Mammary epithelial cell (primary cell): ENCODE measurements at regions of chr12 and their contacts with region 1.

Region 1: GRCh38 chr12:53938326-53939140 is at the start of gene HOXC13:
- DNase-seq: peak; percentile 100
- H3K4me3 ChIP-seq: peak within 1 kb of the TSS; percentile 73 to 89 (median 88)
- H3K27ac ChIP-seq: peak within 1 kb of the TSS; percentile 40
- H3K4me1 ChIP-seq: peaks cover 15% of the 10 kb centered on the region
- H3K27me3 ChIP-seq: no peaks in the 10 kb centered on the region
- CTCF ChIP-seq: no peak
- total RNA-seq, gene HOXC13: 10.2 to 15.7 TPM

Region 2: DNA sequence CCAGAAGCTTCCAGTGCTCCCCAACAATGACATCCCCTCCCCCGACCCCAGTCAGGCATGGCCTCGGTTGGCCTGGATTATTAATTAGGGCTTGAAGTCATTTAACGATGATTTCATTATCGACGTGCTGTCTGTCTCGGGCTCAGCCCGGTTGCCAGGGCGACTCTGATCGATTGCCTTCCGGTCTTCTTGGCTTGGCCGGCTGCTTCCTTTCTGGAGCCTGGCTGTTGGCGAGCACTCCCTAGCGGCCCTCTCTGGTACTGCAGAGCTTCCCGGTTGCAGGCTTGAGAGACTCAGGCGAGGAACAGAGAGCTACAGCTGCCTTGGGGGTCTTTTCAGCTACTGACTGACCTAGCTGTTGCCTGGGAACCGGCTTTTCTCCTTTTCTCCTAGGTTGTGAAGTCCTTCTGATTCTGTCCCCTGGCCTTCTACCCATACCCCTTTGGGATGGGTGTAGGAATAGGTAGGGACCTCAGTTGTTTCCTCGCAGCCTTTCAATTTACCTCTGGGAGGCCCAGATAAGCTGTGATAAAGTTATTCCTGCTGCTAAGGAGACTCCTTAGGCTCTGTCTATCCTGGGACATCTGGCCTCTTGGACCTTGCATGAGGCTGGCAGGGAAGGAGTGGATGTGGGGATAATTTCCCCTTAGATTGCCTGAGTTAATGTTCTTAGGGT is 181.3 kb before region 1 on chr12:
- CTCF ChIA-PET with region 1: interaction called, 5 read pairs
- dilution Hi-C with region 1: no loop called
- in situ Hi-C with region 1: loop called in 1 of 2 experiments (anchors 25 kb)
- intact Hi-C with region 1: no loop called
- DNase-seq: peak; percentile 48
- H3K4me3 ChIP-seq: no peak overlapping the region
- H3K27ac ChIP-seq: no peak overlapping the region
- H3K4me1 ChIP-seq: no peaks in the 10 kb centered on the region
- H3K27me3 ChIP-seq: peaks cover under 1% of the 10 kb centered on the region
- CTCF ChIP-seq: peak; percentile 83 to 92

Region 3: DNA sequence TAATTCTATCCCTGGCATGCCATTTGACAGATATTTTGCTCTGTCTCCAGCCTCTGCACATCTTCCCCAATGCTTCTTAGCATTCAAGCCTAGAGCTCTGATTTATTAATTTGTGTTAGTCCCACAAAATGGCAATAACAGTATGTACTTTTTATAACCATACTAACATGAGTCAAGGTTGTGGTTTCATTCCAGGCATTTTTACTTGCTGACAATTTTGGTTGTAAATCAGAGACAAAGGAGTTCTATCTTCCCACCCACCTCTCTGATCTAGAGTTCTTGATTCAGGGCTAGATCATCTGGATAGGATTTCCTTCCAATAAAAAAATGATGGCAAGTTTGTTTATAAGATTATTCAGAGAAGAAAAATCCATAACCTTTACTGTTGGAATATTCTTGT is 168.3 kb before region 1 on chr12:
- CTCF ChIA-PET with region 1: no interaction called
- dilution Hi-C with region 1: no loop called
- in situ Hi-C with region 1: loop called in 1 of 2 experiments (anchors 25 kb)
- intact Hi-C with region 1: loop called (anchors 1 kb)
- DNase-seq: peak; percentile 93
- H3K4me3 ChIP-seq: no peak overlapping the region
- H3K27ac ChIP-seq: peak overlapping the region; percentile 57
- H3K4me1 ChIP-seq: peaks cover 35% of the 10 kb centered on the region
- H3K27me3 ChIP-seq: no peaks in the 10 kb centered on the region
- CTCF ChIP-seq: no peak

Region 4: DNA sequence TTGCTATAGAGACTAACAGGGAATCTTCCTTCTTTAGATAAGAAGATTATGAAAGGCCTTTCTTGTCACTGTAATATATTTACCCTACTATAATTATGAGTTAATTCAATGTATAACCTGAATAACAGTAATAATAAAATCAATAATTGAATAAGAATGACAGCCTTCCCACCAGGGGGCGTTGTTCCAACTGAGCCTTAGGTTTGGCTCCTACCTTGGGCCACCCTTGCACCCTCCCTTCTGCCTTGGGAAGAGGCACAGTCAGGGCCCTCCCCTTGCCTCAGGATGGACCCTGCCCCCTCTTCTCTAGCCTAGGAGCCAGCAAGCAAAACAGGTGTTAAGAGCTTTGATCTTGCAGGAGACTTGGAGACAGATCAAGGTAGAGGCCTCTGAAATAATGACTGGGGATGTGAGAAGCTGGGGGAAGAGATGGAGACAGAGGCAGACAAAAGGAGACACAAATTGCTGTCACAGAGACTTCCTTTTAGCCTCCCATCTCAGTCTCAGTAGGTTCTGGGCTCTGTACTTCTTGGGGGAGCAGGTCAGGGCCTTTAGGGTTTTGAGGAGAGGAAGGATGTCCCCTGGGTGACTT is 146.7 kb before region 1 on chr12:
- CTCF ChIA-PET with region 1: no interaction called
- dilution Hi-C with region 1: no loop called
- in situ Hi-C with region 1: loop called in 1 of 2 experiments (anchors 10 kb)
- intact Hi-C with region 1: loop called (anchors 1 kb)
- DNase-seq: peak; percentile 26
- H3K4me3 ChIP-seq: no peak overlapping the region
- H3K27ac ChIP-seq: no peak overlapping the region
- H3K4me1 ChIP-seq: no peaks in the 10 kb centered on the region
- H3K27me3 ChIP-seq: no peaks in the 10 kb centered on the region
- CTCF ChIP-seq: peak; percentile 48 to 68

Region 5: DNA sequence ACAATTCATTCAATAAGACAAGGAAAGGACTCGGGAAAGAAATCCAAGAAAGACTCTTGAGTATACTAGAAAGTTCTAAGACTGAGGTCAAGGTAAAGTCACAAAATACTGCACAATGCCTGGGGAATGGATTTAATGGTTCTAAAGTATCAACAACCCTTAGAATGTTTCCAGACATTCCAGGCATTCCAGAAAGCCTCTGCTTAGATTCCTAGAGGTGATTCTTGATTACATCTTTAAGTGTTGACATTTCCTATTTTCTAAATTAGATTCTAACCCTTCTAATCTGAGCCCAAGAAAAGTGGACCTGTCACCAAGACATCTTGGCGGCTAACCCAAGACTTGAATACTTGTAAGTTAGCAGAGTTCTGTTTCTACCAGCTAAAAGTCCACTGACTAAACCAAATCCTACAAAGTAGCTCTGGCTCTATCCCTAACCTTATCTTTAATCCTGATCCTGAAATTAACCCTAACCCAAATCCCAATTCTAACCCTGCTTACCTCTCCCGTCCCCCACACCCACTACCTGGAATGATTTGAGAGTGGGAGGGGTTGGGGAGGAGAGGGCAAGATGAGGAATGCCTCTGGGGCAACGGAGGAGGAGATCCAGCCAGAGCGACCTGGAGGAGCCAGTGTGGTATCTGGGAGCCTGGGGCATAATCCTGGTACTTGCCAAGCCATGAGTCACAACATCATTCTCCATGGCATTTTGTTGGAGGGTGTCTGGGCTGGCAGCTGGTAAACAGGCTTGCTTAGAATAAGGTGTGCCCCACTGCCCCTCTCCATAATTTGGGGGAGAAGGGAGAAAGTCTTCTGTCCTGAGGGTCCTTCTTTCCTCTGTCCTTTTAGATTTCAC is 93.3 kb before region 1 on chr12:
- CTCF ChIA-PET with region 1: interaction called, 7 read pairs
- dilution Hi-C with region 1: no loop called
- in situ Hi-C with region 1: no loop called
- intact Hi-C with region 1: loop called (anchors 1 kb)
- DNase-seq: peak; percentile 83
- H3K4me3 ChIP-seq: no peak overlapping the region
- H3K27ac ChIP-seq: peak overlapping the region; percentile 1
- H3K4me1 ChIP-seq: peaks cover 39% of the 10 kb centered on the region
- H3K27me3 ChIP-seq: no peaks in the 10 kb centered on the region
- CTCF ChIP-seq: no peak

Region 6: GRCh38 chr12:53862831-53863230 is 75.7 kb before region 1 on chr12:
- CTCF ChIA-PET with region 1: no interaction called
- dilution Hi-C with region 1: loop called (anchors 5 kb)
- in situ Hi-C with region 1: no loop called
- intact Hi-C with region 1: no loop called
- DNase-seq: peak; percentile 69
- H3K4me3 ChIP-seq: no peak overlapping the region
- H3K27ac ChIP-seq: peak overlapping the region; percentile 55
- H3K4me1 ChIP-seq: peaks cover 45% of the 10 kb centered on the region
- H3K27me3 ChIP-seq: no peaks in the 10 kb centered on the region
- CTCF ChIP-seq: no peak

Region 7: DNA sequence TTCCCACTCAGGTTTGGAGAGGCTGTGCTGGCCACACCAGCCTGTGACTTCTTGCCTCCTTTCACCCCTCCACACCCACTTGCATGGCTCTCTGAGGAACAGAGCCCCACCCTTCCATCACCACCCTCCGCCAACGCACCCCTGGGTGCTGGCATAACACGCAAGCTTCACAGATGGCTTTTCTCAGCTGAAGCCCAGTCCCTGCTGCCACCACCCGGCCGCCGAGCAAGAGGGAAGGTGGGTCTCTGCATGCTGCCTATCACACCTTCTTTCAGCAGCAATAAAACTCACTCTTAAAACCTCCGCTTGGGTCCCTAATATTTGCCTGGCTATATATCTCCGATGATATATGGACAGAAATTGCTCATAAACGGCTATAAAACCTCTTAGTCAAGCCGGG is 208.7 kb after region 1 on chr12:
- CTCF ChIA-PET with region 1: no interaction called
- dilution Hi-C with region 1: no loop called
- in situ Hi-C with region 1: no loop called
- intact Hi-C with region 1: no loop called
- DNase-seq: no peak
- H3K4me3 ChIP-seq: no peak overlapping the region
- H3K27ac ChIP-seq: no peak overlapping the region
- H3K4me1 ChIP-seq: no peaks in the 10 kb centered on the region
- H3K27me3 ChIP-seq: no peaks in the 10 kb centered on the region
- CTCF ChIP-seq: no peak